OCI-LY7 (cell line): ENCODE measurements at regions of chr2 and their contacts with region 1.

Region 1: DNA sequence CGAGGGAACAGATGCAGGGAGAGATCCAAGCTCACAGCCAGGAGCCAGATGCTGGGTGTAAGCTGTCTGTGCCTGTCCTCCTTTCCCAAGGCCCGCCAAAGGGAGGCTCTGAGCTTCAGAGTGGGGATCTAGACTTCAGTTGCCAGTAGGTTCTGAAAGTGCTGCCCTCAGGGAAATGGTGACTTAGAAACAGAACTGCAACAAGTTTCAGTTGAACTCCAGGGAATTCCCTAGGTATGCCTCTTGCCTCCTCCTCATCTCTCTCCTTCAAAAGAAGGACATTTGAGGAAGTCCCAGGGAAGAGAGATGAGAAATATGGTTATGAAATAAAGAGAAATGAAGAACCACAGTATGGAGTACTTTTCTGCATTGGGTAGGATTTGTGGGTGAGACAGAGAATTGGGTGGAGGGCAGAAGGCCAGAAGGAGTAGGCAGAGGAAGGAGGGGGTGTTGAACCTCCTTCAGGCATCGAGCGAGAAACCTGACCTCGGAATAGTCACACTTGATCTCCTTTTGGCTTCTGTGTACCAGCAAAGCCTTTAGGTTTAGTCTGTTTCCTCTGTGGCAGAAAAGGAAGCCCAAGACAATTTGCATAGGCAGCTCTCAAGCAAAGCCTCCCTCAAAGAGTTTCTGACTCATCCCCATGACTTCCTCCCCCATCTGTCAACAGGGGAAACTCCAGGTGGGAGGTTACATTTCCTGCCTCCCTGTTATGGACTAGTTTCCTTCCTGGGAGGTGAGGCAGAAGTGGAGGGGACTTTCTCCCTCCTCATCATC is 45.7 kb downstream of the QPCT start:
- DNase-seq: peak; percentile 93
- H3K4me3 ChIP-seq: peak overlapping the region; percentile 48
- H3K27ac ChIP-seq: peak overlapping the region; percentile 80
- H3K4me1 ChIP-seq: peaks cover 75% of the 10 kb centered on the region
- CTCF ChIP-seq: no peak

Region 2: GRCh38 chr2:37168217-37168981 is 221.8 kb before region 1 on chr2:
- CTCF ChIA-PET with region 1: no interaction called
- POLR2A ChIA-PET with region 1: no interaction called
- intact Hi-C with region 1: loop called (anchors 5 kb)
- DNase-seq: peak; percentile 60
- H3K4me3 ChIP-seq: no peak overlapping the region
- H3K27ac ChIP-seq: no peak overlapping the region
- H3K4me1 ChIP-seq: no peaks in the 10 kb centered on the region
- CTCF ChIP-seq: peak; percentile 94

Region 3: DNA sequence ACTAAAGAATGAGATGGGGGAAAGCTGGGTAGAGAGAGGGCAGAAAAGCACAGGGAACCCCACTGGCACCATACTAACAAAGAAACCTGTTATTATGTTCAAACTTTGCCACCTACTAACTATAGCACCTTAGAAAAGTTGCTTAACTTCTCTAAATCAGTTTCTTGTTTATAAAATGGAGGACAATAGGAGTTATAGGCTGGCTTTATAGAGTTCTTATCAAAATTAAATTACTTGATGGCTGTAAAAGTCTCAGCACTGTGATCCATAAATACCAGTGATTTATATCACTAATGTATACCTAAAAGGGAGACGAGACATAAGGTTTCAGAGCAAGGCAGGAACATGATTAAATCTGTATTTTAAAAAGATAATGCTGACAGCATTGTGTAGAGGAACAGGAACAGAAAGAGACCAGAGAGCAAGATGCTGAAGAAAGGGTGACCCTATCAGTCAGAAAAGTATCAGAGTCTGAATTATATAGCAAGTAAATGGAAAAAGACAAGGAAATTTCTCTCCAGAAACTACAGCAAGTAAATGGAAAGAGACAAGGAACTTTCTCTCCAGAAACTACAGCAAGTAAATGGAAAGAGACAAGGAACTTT is 94.6 kb before region 1 on chr2:
- CTCF ChIA-PET with region 1: no interaction called
- POLR2A ChIA-PET with region 1: no interaction called
- intact Hi-C with region 1: no loop called
- DNase-seq: no peak
- H3K4me3 ChIP-seq: no peak overlapping the region
- H3K27ac ChIP-seq: peak overlapping the region; percentile 10
- H3K4me1 ChIP-seq: peaks cover 11% of the 10 kb centered on the region
- CTCF ChIP-seq: no peak

Region 4: DNA sequence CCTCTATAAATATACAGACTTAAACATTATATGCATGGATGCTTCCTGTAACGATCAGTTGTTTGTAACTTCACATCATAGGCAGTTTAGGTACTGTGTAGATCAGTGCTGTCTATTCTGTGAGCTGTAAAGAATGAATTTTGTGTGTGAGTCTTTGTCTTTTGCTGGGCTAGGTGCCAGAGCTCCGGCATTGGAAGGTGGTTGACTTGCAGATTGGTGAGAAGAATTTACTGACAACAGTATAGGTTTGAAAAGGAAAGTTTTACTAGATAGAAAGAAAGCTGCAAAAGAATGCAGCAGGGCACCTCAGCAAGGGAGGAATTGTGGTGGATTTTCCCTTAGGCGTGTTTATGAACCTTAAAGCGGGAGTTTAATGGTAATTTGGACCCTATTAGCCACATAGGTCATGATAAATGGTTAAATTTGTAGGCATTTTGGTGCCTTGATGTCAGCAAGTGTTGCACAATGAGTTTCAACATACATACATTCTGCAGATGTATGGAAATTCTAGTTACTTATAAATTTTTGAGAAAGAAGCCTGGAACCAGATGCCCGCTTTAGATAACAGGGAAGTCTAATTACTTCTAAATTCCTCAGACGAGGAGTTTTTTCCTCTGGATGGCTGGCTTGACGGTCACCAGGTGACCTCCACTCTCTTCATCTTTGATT is 52.4 kb before region 1 on chr2:
- CTCF ChIA-PET with region 1: no interaction called
- POLR2A ChIA-PET with region 1: interaction called, 26 read pairs
- intact Hi-C with region 1: loop called (anchors 2 kb)
- DNase-seq: peak; percentile 35
- H3K4me3 ChIP-seq: peak overlapping the region; percentile 49
- H3K27ac ChIP-seq: peak overlapping the region; percentile 74
- H3K4me1 ChIP-seq: peaks cover 76% of the 10 kb centered on the region
- CTCF ChIP-seq: no peak

Region 5: GRCh38 chr2:37523814-37524362 is 133.7 kb after region 1 on chr2:
- CTCF ChIA-PET with region 1: no interaction called
- POLR2A ChIA-PET with region 1: no interaction called
- intact Hi-C with region 1: loop called (anchors 5 kb)
- DNase-seq: no peak
- H3K4me3 ChIP-seq: no peak overlapping the region
- H3K27ac ChIP-seq: no peak overlapping the region
- H3K4me1 ChIP-seq: no peaks in the 10 kb centered on the region
- CTCF ChIP-seq: no peak

Region 6: GRCh38 chr2:37672104-37672869 is 282.1 kb after region 1 on chr2:
- CTCF ChIA-PET with region 1: no interaction called
- POLR2A ChIA-PET with region 1: no interaction called
- intact Hi-C with region 1: loop called (anchors 5 kb)
- DNase-seq: peak; percentile 88
- H3K4me3 ChIP-seq: peak overlapping the region; percentile 94
- H3K27ac ChIP-seq: peak overlapping the region; percentile 59
- H3K4me1 ChIP-seq: peaks cover 44% of the 10 kb centered on the region
- CTCF ChIP-seq: no peak

Region 7: DNA sequence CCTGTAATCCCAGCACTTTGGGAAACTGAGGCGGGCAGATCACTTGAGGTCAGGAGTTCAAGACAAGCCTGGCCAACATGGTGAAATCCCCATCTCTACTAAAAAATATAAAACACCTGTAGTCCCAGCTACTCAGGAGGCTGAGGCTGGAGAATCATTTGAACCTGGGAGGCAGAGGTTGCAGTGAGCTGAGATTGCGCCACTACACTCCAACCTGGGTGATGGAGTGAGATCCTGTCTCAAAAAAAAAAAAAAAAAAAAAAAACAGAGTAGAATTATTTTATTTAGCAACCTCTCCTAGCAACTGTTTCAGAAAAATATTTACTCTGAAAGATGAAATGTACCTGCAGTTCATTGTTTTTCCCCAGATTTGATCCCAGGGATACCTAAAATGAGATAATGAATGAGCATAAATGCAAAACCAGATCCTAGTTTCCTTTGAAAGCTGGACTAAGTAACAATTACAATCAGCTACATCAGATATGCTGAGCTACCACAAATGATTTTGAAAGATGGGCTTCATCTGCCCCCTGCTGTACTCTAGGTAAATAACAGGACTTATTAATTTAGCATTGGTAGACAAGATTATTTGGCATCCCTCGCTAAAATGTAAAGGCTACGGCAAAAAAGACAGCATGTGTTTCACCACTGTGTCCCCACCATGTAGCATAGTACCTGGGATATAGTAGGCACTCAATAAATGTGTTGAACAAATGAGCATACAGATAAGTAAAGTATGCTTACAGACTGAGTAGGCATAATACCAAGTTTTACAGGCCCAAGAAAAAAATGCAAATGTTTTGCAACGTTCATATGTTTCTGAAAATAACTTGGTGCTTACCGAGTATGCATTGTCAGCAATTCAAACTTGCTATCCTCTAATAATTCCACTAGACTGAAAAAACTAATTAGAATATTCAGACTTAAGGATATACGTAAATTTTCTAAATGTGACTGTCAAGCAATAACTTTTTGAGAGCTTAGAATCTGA is 884.4 kb after region 1 on chr2:
- CTCF ChIA-PET with region 1: no interaction called
- POLR2A ChIA-PET with region 1: no interaction called
- intact Hi-C with region 1: loop called (anchors 5 kb)
- DNase-seq: peak; percentile 73
- H3K4me3 ChIP-seq: no peak overlapping the region
- H3K27ac ChIP-seq: no peak overlapping the region
- H3K4me1 ChIP-seq: peaks cover 4% of the 10 kb centered on the region
- CTCF ChIP-seq: peak; percentile 88